Sigmoid colon (tissue), 7 donors: ENCODE measurements at regions of chr11 and their contacts with region 1.

Region 1: GRCh38 chr11:83827940-83828554 is 541.9 kb upstream of the CCDC90B start:
- DNase-seq: no peak
- H3K4me3 ChIP-seq: peak overlapping the region; percentile 10 to 38 (median 31)
- H3K27ac ChIP-seq: no peak overlapping the region
- H3K4me1 ChIP-seq: no peaks in the 10 kb centered on the region
- H3K27me3 ChIP-seq: no peaks in the 10 kb centered on the region
- CTCF ChIP-seq: peak in 3 of 4 experiments; percentile 35 to 50 (median 36)
- EP300 ChIP-seq: no peak
- POLR2A ChIP-seq: no peak

Region 2: DNA sequence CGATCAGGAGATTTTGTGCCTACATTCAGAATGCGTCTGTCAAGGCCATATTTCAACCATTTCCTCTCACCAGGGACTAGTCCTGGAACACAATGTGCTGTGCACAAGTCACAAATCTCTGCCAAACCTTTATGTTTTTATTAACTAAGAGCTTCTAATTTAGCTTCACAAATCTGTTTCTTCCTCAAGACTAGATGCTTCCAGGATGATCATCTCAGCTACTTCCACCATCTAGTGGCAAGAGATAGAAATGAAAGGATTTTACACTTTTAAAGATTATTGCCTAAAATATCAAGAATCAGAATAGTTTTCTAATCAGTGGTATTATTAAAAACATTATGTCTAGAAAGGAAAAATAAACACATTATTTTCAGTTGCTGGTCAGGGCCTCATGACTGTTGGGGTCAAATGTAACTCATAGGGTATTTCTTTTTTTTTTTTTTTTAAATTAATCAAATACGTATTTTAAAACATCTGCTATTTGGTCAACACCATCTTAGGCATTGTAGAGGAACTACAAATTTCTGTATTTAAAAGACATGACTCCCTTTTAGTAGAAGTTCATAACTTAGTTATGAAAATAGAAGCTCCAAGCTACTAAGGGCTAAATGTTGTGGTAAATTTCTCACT is 696.5 kb after region 1 on chr11:
- intact Hi-C with region 1: loop called (anchors 5 kb)
- DNase-seq: no peak
- H3K4me3 ChIP-seq: no peak overlapping the region
- H3K27ac ChIP-seq: no peak overlapping the region
- H3K4me1 ChIP-seq: no peaks in the 10 kb centered on the region
- H3K27me3 ChIP-seq: no peaks in the 10 kb centered on the region
- CTCF ChIP-seq: peak in 2 of 4 experiments; percentile 18 to 23
- EP300 ChIP-seq: no peak
- POLR2A ChIP-seq: no peak

Region 3: DNA sequence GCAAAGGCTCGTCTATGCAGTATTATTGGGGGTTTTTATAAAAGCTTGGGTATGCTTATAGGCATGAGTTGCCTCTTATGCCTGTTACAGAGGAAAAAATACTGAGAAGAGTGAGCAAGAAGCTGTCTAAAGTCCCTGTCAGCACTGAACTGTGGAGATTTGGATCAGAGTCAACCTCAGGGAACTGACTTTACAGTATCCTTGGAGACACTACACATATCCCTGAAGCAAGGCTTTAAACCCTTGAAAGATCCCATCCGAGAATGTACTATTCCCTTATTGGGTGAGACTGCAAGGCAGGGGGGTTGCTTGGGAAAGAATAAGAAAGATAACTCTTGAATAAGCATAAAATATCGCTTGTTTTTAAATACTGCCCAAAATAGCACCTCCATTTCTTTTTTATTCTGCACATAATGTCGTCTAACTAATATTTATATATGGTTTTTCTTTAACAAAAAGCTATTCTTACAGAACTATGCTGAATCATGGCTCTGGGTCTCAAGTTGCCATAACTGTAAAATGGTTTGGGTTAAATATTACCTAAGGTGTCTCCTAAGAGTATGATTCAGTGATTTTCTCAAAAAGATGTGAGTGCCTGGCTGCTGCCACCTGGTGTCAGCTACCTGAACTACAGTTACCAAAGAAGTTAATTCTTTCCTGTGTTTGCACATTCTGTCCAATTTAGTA is 736.3 kb after region 1 on chr11:
- intact Hi-C with region 1: loop called (anchors 5 kb)
- DNase-seq: no peak
- H3K4me3 ChIP-seq: no peak overlapping the region
- H3K27ac ChIP-seq: peak overlapping the region in 1 of 4 donors; percentile 51
- H3K4me1 ChIP-seq: peaks cover 0 to 6% (median 0%) of the 10 kb centered on the region in 4 donors
- H3K27me3 ChIP-seq: no peaks in the 10 kb centered on the region
- CTCF ChIP-seq: peak; percentile 22 to 78 (median 61)
- EP300 ChIP-seq: no peak
- POLR2A ChIP-seq: no peak